GM12878 (cell line): ENCODE measurements at regions of chr10 and their contacts with region 1.

Region 1: GRCh38 chr10:66931340-66931948 is 5.6 kb downstream of the LRRTM3 start:
- DNase-seq: peak; percentile 8
- ATAC-seq: peak; percentile 79
- H3K4me3 ChIP-seq: no peak overlapping the region
- H3K27ac ChIP-seq: no peak overlapping the region
- H3K4me1 ChIP-seq: no peaks in the 10 kb centered on the region
- H3K27me3 ChIP-seq: peaks cover 0 to 8% of the 10 kb centered on the region in 2 experiments; a peak in 1 of 4 replicates
- CTCF ChIP-seq: peak; percentile 65 to 72 (median 65)
- EP300 ChIP-seq: no peak
- POLR2A ChIP-seq: no peak
- RAD21 ChIP-seq: peak; percentile 82

Region 2: DNA sequence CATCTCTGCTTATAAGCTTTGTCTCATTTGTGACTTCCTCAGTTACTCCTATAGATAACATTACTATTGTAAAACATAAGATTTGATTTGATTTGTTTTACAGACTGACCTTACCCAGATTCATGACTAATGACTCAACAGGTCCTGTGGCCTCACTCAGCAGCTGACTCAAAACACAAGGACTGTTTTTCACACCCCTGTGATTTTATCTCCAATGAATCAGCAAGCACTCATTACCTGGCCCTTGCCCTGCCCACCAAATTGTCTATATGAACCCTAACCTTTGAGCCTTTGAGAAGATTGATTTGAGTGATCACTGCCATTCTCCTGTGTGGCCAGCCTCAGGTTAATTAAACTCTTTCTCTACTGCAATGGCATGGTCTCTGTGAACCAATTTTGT is 1070.2 kb before region 1 on chr10:
- CTCF ChIA-PET with region 1: no interaction called
- POLR2A ChIA-PET with region 1: no interaction called
- RAD21 ChIA-PET with region 1: no interaction called
- SMC1A ChIA-PET with region 1: no interaction called
- in situ Hi-C with region 1: no loop called
- intact Hi-C with region 1: loop called (anchors 5 kb)
- DNase-seq: peak; percentile 39
- ATAC-seq: peak; percentile 97
- H3K4me3 ChIP-seq: no peak overlapping the region
- H3K27ac ChIP-seq: no peak overlapping the region
- H3K4me1 ChIP-seq: no peaks in the 10 kb centered on the region
- H3K27me3 ChIP-seq: no peaks in the 10 kb centered on the region
- CTCF ChIP-seq: no peak
- EP300 ChIP-seq: no peak
- POLR2A ChIP-seq: no peak
- RAD21 ChIP-seq: no peak

Region 3: DNA sequence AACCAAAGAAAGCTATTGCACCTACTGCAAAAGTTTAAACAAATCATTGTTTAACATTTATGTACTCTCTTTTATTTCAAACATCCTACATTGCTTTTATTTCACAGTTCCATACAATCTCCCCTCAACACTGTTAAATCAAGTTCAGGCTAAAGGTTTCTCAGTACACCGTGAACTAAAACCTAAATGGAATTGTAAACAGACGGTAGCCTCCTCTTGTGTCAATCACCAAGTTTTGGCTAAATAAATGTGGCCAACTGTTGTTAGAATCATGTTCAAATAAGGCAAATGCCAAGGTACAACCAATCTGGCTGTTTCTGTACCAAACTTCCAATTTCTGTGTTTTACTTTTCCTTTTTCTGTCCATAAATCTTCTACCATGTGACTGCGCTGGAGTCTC is 729.3 kb before region 1 on chr10:
- CTCF ChIA-PET with region 1: no interaction called
- POLR2A ChIA-PET with region 1: no interaction called
- RAD21 ChIA-PET with region 1: no interaction called
- SMC1A ChIA-PET with region 1: no interaction called
- in situ Hi-C with region 1: no loop called
- intact Hi-C with region 1: no loop called
- DNase-seq: no peak
- ATAC-seq: no peak
- H3K4me3 ChIP-seq: no peak overlapping the region
- H3K27ac ChIP-seq: no peak overlapping the region
- H3K4me1 ChIP-seq: no peaks in the 10 kb centered on the region
- H3K27me3 ChIP-seq: no peaks in the 10 kb centered on the region; a peak in 1 of 4 replicates
- CTCF ChIP-seq: no peak
- EP300 ChIP-seq: no peak
- POLR2A ChIP-seq: no peak
- RAD21 ChIP-seq: no peak

Region 4: DNA sequence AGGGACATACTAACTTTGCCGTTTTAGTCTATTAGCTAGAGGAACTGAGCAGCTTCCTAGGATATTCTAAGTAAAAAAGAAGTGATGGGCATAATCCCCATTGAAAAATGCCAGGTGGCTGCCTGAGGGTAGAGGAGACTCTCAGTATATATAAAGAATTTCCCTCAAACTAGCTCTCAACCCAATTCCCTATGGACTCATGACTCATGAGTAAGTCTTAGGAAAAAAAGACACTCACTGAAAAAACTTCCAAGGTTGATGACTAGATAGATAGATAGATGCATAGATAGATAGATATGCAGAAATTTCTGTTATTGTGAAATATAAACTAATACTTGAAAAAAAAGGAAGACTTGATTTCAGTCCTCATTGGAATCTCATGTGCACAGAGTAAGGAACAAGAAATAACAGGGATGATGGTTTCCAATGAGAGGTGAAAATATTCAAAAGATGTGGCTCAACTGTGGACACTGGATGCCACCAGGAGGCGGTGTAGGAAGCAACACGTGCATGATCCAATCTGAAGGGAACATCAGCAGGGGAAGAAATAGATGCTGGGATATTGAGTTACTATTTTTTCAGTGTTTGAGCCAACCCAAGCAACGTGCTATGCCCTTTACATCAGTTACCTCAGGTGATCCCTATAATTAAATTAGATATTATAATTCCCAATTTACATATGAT is 716.6 kb before region 1 on chr10:
- CTCF ChIA-PET with region 1: interaction called, 3 read pairs
- POLR2A ChIA-PET with region 1: no interaction called
- RAD21 ChIA-PET with region 1: no interaction called
- SMC1A ChIA-PET with region 1: no interaction called
- in situ Hi-C with region 1: no loop called
- intact Hi-C with region 1: loop called (anchors 2 kb)
- DNase-seq: no peak
- ATAC-seq: no peak
- H3K4me3 ChIP-seq: no peak overlapping the region
- H3K27ac ChIP-seq: no peak overlapping the region
- H3K4me1 ChIP-seq: no peaks in the 10 kb centered on the region
- H3K27me3 ChIP-seq: no peaks in the 10 kb centered on the region
- CTCF ChIP-seq: peak; percentile 14 to 28 (median 25); a peak in 4 of 6 replicates
- EP300 ChIP-seq: no peak
- POLR2A ChIP-seq: no peak
- RAD21 ChIP-seq: peak; percentile 43

Region 5: DNA sequence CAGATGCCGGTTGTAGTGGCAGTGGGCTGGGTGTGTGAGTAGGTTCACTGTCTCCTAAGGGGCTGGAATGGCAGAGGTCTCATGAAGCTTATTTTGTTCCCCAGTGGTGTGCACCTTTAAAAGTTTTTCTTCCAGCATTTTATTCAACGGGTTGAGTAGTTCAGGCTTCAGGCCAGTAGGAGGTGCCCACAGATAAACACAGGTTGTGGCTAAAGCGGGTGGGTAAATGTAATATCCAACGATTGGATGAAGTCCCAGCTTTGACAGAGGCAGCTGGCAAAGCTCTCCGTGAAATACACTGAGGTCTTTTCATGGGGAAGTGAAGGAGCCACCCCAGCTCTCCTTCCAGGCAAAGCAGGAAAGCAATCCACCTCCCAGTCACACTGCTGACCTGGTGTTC is 345.4 kb before region 1 on chr10:
- CTCF ChIA-PET with region 1: interaction called, 4 read pairs
- POLR2A ChIA-PET with region 1: no interaction called
- RAD21 ChIA-PET with region 1: interaction called, 4 read pairs
- SMC1A ChIA-PET with region 1: interaction called, 14 read pairs
- in situ Hi-C with region 1: no loop called
- intact Hi-C with region 1: loop called (anchors 5 kb)
- DNase-seq: no peak
- ATAC-seq: peak; percentile 52
- H3K4me3 ChIP-seq: no peak overlapping the region
- H3K27ac ChIP-seq: no peak overlapping the region
- H3K4me1 ChIP-seq: no peaks in the 10 kb centered on the region
- H3K27me3 ChIP-seq: no peaks in the 10 kb centered on the region
- CTCF ChIP-seq: no peak
- EP300 ChIP-seq: no peak
- POLR2A ChIP-seq: no peak
- RAD21 ChIP-seq: no peak